Vagina (tissue), 2 donors: ENCODE measurements at regions of chr11 and their contacts with region 1.

Region 1: GRCh38 chr11:122954455-122954854 is 27.2 kb downstream of the BSX start:
- DNase-seq: no peak
- H3K4me3 ChIP-seq: no peak overlapping the region
- H3K27ac ChIP-seq: no peak overlapping the region
- H3K4me1 ChIP-seq: no peaks in the 10 kb centered on the region
- H3K27me3 ChIP-seq: no peaks in the 10 kb centered on the region
- CTCF ChIP-seq: no peak
- POLR2A ChIP-seq: no peak

Region 2: DNA sequence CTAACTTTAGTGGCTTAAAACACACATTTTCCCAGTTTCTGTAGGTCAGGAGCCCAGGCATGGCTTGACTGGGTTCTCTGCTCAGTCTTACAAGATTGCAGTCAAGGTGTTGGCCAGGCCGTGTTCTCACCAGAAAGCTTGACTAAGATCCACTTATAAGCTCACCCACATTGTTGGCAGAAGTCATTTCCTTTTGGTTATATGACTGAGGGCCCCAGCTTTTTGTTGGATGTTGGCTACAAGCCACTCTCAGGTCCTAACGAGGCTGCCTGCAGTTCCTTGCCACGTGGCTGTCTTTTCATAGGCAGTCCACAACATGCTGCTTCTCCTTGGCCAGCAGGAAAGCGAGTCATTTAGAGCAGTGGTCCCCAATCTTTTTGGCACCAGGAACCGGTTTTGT is 195.5 kb before region 1 on chr11:
- intact Hi-C with region 1: no loop called
- DNase-seq: no peak
- H3K4me3 ChIP-seq: no peak overlapping the region
- H3K27ac ChIP-seq: no peak overlapping the region
- H3K4me1 ChIP-seq: peaks cover 6% of the 10 kb centered on the region
- H3K27me3 ChIP-seq: no peaks in the 10 kb centered on the region
- CTCF ChIP-seq: no peak
- POLR2A ChIP-seq: no peak

Region 3: GRCh38 chr11:124315052-124315451 is 1360.6 kb after region 1 on chr11:
- intact Hi-C with region 1: loop called (anchors 10 kb)
- DNase-seq: no peak
- H3K4me3 ChIP-seq: no peak overlapping the region
- H3K27ac ChIP-seq: no peak overlapping the region
- H3K4me1 ChIP-seq: no peaks in the 10 kb centered on the region
- H3K27me3 ChIP-seq: no peaks in the 10 kb centered on the region
- CTCF ChIP-seq: no peak
- POLR2A ChIP-seq: no peak